Posterior vena cava (tissue), 2 donors: ENCODE measurements at regions of chr16 and their contacts with region 1.

Region 1: DNA sequence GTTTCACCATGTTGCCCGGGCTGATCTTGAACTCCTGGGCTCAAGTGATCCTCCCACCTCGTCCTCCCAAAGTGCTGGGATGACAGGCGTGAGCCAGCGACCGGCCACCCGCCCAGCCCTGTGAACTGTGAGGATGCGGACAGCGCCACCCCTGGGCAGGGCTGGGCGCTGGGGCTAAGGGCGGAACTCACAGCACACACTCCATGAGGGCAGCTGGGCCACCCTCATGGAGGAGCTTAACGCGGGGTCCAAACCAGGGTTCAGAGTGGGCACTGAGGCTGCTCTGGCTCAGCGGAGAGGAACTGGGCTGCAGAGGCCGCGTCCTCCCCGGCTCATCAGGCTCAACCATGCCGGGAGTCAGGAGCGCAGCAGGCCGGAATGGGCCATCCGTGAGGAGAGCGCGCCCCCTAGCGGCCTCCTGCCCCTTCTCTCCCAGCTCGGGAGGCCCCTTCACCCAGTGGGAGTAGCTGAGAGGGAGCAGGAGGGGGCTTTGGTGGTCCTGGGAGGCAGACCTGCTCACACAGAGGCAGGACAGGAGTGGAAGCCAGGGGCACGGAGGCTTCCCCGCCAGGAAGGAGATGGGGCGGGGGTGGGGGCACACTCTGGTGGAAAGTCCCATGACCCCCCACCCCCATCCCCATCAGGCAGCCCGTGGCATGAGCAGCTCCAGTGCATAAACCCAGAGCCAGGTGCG is 13.8 kb downstream of the CORO7 start:
- DNase-seq: peak; percentile 95

Region 2: GRCh38 chr16:4334724-4335509 is 67.7 kb before region 1 on chr16:
- intact Hi-C with region 1: loop called in 1 of 2 experiments (anchors 2 kb)
- DNase-seq: no peak

Region 3: GRCh38 chr16:4358831-4359561 is 43.6 kb before region 1 on chr16:
- intact Hi-C with region 1: loop called (anchors 1 to 2 kb)
- DNase-seq: no peak